ENCODE measurements at regions of chr6 and their contacts with region 1.

Region 1: DNA sequence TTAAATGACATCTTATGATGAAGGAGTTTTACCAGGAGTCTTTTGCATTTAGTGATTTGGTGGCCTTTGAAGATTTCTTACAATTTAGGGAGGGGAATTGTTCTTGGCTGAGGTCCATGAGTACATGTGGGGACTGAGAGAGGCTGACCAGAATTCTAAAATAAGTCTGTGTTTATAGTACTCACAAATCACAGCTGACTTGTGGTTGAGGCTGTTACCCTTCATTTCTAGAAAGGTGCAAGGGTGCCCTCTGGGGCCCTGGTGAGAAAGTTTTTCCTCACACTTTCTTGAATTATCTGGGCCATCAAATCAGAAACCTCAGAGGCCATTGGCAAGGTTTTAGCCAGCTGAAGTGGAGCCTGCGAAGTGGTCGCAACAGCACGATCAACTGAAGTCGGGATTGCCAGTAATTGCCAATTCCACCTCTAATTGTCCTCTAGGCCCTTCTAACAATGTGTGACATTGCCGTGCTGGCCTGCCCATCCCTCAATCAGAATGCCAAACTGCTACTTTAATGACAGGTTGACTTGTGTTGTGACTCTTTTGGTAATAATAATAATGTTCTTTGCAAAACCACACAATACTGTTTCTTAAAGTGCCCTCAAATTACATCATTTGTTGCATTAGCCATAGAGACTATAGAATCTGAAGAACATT is 221.6 kb downstream of the OGFRL1 start:
- DNase-seq: peak; percentile 79
- H3K4me3 ChIP-seq: no peak overlapping the region
- H3K27ac ChIP-seq: no peak overlapping the region
- H3K4me1 ChIP-seq: peaks cover 7% of the 10 kb centered on the region
- H3K27me3 ChIP-seq: no peaks in the 10 kb centered on the region
- CTCF ChIP-seq: peak; percentile 57 to 59
- POLR2A ChIP-seq: no peak

Region 2: GRCh38 chr6:71294121-71294523 is 216.1 kb before region 1 on chr6:
- CTCF ChIA-PET with region 1: no interaction called
- POLR2A ChIA-PET with region 1: no interaction called
- dilution Hi-C with region 1: no loop called
- intact Hi-C with region 1: loop called (anchors 5 kb)
- DNase-seq: peak; percentile 24
- H3K4me3 ChIP-seq: no peak overlapping the region
- H3K27ac ChIP-seq: no peak overlapping the region
- H3K4me1 ChIP-seq: peaks cover 26% of the 10 kb centered on the region
- H3K27me3 ChIP-seq: no peaks in the 10 kb centered on the region
- CTCF ChIP-seq: no peak
- POLR2A ChIP-seq: no peak

Region 3: GRCh38 chr6:71404145-71404966 is 105.8 kb before region 1 on chr6:
- CTCF ChIA-PET with region 1: interaction called, 15 read pairs
- POLR2A ChIA-PET with region 1: no interaction called
- dilution Hi-C with region 1: loop called (anchors 25 kb)
- intact Hi-C with region 1: no loop called
- DNase-seq: peak; percentile 94
- H3K4me3 ChIP-seq: peak overlapping the region; percentile 22 to 83 (median 41)
- H3K27ac ChIP-seq: peak overlapping the region; percentile 95
- H3K4me1 ChIP-seq: peaks cover 89% of the 10 kb centered on the region
- H3K27me3 ChIP-seq: no peaks in the 10 kb centered on the region
- CTCF ChIP-seq: no peak
- POLR2A ChIP-seq: no peak

Region 4: DNA sequence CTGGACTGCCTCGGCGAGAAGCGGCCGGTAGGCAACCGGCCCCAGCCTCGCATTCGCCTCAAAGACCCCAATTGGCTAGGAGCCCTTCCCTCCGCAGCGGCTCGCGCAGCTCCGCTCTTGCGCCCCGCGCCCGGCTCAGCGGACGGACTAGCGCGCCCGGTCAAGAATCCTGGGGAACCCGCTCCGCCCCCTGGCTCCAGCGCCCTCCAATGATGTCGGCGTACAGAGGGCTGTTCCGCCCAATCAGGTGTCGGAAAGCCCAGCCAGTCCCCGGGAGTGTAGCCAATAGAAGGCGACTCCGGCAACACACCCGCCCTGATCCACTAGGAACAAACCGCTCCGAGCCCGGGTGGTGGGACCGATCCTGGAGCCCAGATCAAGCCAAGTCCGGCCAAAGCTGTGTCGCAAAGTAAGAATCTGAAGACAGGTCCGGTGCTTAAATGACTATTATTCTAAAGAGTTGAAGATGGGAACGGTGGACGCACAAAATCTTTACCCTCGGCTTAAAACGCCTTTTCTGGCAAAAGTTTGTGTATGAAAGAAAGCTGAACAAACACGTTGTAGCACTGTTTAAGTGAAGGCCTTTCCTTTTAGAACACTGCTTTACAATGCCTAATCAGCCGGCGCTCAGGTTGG is 89.4 kb before region 1 on chr6:
- CTCF ChIA-PET with region 1: interaction called, 19 read pairs
- POLR2A ChIA-PET with region 1: interaction called, 4 read pairs
- dilution Hi-C with region 1: no loop called
- intact Hi-C with region 1: loop called (anchors 1 kb)
- DNase-seq: peak; percentile 97
- H3K4me3 ChIP-seq: peak overlapping the region; percentile 65 to 97 (median 93)
- H3K27ac ChIP-seq: peak overlapping the region; percentile 71
- H3K4me1 ChIP-seq: peaks cover 18% of the 10 kb centered on the region
- H3K27me3 ChIP-seq: no peaks in the 10 kb centered on the region
- CTCF ChIP-seq: no peak
- POLR2A ChIP-seq: peak; percentile 89

Region 5: DNA sequence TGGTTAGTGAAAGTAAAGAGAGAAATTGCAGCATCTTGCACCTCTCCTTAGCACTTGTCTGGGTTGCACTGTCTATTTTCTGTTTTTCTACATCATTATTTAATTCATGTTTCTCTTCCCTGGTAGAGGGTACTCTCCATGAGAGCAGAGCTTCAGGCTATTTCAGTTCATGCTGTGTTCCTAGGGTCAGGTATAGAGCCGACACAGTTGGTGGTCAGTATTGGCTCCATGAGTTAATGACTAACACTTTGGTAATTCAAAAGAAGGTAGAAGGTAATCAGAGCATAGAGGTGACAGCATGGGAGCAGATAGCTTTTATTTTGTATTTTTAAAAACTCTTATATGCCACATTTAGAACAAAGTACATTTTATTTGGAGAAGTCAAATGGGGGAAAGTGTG is 418.9 kb after region 1 on chr6:
- CTCF ChIA-PET with region 1: no interaction called
- POLR2A ChIA-PET with region 1: no interaction called
- dilution Hi-C with region 1: no loop called
- intact Hi-C with region 1: no loop called
- DNase-seq: no peak
- H3K4me3 ChIP-seq: no peak overlapping the region
- H3K27ac ChIP-seq: no peak overlapping the region
- H3K4me1 ChIP-seq: no peaks in the 10 kb centered on the region
- H3K27me3 ChIP-seq: no peaks in the 10 kb centered on the region
- CTCF ChIP-seq: no peak
- POLR2A ChIP-seq: no peak